ENCODE measurements at regions of chr7 and their contacts with region 1.

Region 1: DNA sequence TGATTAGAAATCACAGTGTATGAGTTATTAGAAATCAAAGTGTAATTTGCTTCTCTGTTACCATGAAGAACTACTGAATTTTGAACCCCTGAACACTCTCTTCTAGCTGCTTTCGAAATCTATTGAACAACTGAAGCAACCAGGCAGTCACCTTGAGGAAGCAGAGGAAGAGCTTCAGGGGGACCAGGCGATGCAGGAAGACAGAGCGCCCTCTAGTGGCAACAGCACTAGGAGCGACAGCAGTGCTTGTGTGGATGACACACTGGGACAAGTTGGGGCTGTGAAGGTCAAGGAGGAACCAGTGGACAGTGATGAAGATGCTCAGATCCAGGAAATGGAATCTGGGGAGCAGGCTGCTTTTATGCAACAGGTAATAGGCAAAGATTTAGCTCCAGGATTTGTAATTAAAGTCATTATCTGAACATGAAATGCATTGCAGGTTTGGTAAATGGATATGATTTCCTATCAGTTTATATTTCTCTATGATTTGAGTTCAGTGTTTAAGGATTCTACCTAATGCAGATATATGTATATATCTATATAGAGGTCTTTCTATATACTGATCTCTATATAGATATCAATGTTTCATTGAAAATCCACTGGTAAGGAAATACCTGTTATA is 170.7 kb downstream of the HDAC9 start:
- DNase-seq: peak; percentile 53
- H3K4me3 ChIP-seq: no peak overlapping the region
- H3K27ac ChIP-seq: peak overlapping the region; percentile 81 to 82
- H3K4me1 ChIP-seq: peaks cover 9 to 16% of the 10 kb centered on the region in 2 experiments; a peak in 3 of 4 replicates
- H3K27me3 ChIP-seq: no peaks in the 10 kb centered on the region
- CTCF ChIP-seq: peak; percentile 100
- EP300 ChIP-seq: no peak
- RAD21 ChIP-seq: peak; percentile 81

Region 2: DNA sequence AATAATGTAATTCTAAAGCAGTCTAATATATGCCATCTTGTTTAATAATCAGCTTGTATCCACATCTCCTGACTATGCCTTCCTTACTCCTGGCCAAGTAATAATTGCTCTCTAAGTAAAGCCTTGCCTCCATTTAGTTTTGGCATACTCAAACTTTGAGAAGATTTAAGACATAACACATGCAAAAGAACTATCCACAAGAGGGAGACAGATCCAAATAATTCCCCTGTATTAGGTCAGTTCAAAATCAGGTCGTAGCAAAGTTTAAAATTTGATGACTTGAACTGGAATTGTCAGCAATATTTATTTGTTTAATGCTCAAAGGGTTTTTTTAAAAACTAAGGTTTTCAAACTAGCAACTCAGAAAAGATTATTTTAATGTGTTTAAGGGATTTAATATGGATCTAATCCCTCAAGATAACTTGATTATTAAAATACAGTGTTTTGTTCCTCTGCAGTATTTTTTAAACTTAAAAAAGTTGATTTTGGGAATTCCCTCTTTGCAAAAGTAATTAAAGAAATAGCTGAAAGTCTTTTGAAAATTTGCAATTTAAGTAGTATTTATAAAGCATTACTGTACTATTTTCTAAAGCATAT is 75.4 kb before region 1 on chr7:
- CTCF ChIA-PET with region 1: interaction called, 38 read pairs
- POLR2A ChIA-PET with region 1: no interaction called
- DNase-seq: peak; percentile 62
- H3K4me3 ChIP-seq: no peak overlapping the region
- H3K27ac ChIP-seq: peak overlapping the region in 1 of 2 experiments; percentile 50; a peak in 3 of 4 replicates
- H3K4me1 ChIP-seq: peaks cover 0 to 2% of the 10 kb centered on the region in 2 experiments; a peak in 1 of 4 replicates
- H3K27me3 ChIP-seq: no peaks in the 10 kb centered on the region
- CTCF ChIP-seq: peak; percentile 96
- EP300 ChIP-seq: no peak
- RAD21 ChIP-seq: peak; percentile 96

Region 3: GRCh38 chr7:18638594-18639452 is 27.4 kb before region 1 on chr7:
- CTCF ChIA-PET with region 1: interaction called, 18 read pairs
- POLR2A ChIA-PET with region 1: no interaction called
- DNase-seq: no peak
- H3K4me3 ChIP-seq: no peak overlapping the region
- H3K27ac ChIP-seq: peak overlapping the region; percentile 21 to 56; a peak in 2 of 4 replicates
- H3K4me1 ChIP-seq: peaks cover 0 to 8% of the 10 kb centered on the region in 2 experiments; a peak in 2 of 4 replicates
- H3K27me3 ChIP-seq: no peaks in the 10 kb centered on the region
- CTCF ChIP-seq: no peak
- EP300 ChIP-seq: peak in 1 of 2 experiments; percentile 33; a peak in 1 of 4 replicates
- RAD21 ChIP-seq: no peak

Region 4: GRCh38 chr7:18648849-18649758 is 17.1 kb before region 1 on chr7:
- CTCF ChIA-PET with region 1: interaction called, 38 read pairs
- POLR2A ChIA-PET with region 1: no interaction called
- DNase-seq: no peak
- H3K4me3 ChIP-seq: no peak overlapping the region
- H3K27ac ChIP-seq: no peak overlapping the region
- H3K4me1 ChIP-seq: peaks cover 0 to 4% of the 10 kb centered on the region in 2 experiments
- H3K27me3 ChIP-seq: no peaks in the 10 kb centered on the region
- CTCF ChIP-seq: no peak
- EP300 ChIP-seq: no peak
- RAD21 ChIP-seq: no peak

Region 5: DNA sequence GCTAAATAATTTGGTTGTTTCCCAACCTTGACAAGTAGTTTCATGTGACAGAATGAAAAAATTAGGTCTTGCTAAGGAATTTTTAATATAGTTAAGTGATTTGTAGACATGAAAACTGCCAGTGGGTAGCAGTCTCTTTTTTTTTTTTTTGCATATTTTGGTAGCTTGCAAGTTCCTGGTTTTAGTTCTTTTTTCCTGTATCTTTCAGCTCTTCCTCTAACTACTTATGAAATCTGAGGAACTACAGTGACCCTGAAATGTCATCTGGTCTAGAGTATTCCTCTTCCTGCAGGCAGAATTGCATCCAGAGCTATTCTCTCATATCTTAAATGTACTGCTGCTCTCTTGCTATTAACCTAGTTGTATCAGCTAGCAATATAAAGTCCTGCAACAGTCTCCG is 10.3 kb before region 1 on chr7:
- CTCF ChIA-PET with region 1: interaction called, 38 read pairs
- POLR2A ChIA-PET with region 1: no interaction called
- DNase-seq: no peak
- H3K4me3 ChIP-seq: no peak overlapping the region
- H3K27ac ChIP-seq: no peak overlapping the region; a peak in 1 of 4 replicates
- H3K4me1 ChIP-seq: peaks cover 0 to 5% of the 10 kb centered on the region in 2 experiments
- H3K27me3 ChIP-seq: no peaks in the 10 kb centered on the region
- CTCF ChIP-seq: no peak
- EP300 ChIP-seq: no peak
- RAD21 ChIP-seq: no peak

Region 6: GRCh38 chr7:18680576-18680975 is 14.4 kb after region 1 on chr7:
- CTCF ChIA-PET with region 1: interaction called, 27 read pairs
- POLR2A ChIA-PET with region 1: no interaction called
- DNase-seq: no peak
- H3K4me3 ChIP-seq: no peak overlapping the region
- H3K27ac ChIP-seq: peak overlapping the region; percentile 10 to 40; a peak in 1 of 4 replicates
- H3K4me1 ChIP-seq: peaks cover 4 to 10% of the 10 kb centered on the region in 2 experiments; a peak in 3 of 4 replicates
- H3K27me3 ChIP-seq: no peaks in the 10 kb centered on the region
- CTCF ChIP-seq: no peak
- EP300 ChIP-seq: peak in 1 of 2 experiments; percentile 25; a peak in 1 of 4 replicates
- RAD21 ChIP-seq: no peak

Region 7: GRCh38 chr7:18685971-18686370 is 19.8 kb after region 1 on chr7:
- CTCF ChIA-PET with region 1: interaction called, 14 read pairs
- POLR2A ChIA-PET with region 1: no interaction called
- DNase-seq: no peak
- H3K4me3 ChIP-seq: no peak overlapping the region
- H3K27ac ChIP-seq: 0 out of 4 replicates have a peak overlapping the region, but pooled peaks of 1 of the 2 experiments have one; percentile 1
- H3K4me1 ChIP-seq: peaks cover 0 to 11% of the 10 kb centered on the region in 2 experiments; a peak in 2 of 4 replicates
- H3K27me3 ChIP-seq: no peaks in the 10 kb centered on the region
- CTCF ChIP-seq: no peak
- EP300 ChIP-seq: no peak
- RAD21 ChIP-seq: no peak

Measured in SK-N-SH (cell line).